A549 (cell line): ENCODE measurements at regions of chr14 and their contacts with region 1.

Region 1: GRCh38 chr14:68843471-68844209 is 50.8 kb upstream of the ZFP36L1 start:
- DNase-seq: peak; percentile 69 to 76
- ATAC-seq: peak; percentile 91 to 96
- H3K4me3 ChIP-seq: no peak overlapping the region; the same call in 2 of the 3 replicates
- H3K27ac ChIP-seq: peak overlapping the region; percentile 35 to 83
- H3K4me1 ChIP-seq: 0 out of 3 replicates have a peak, but pooled peaks cover 4% of the 10 kb centered on the region
- CTCF ChIP-seq: peak; percentile 96
- EP300 ChIP-seq: no peak
- POLR2A ChIP-seq: no peak
- RAD21 ChIP-seq: peak; percentile 83 to 87

Region 2: GRCh38 chr14:67883717-67884116 is 959.9 kb before region 1 on chr14:
- CTCF ChIA-PET with region 1: interaction called, 30 read pairs
- POLR2A ChIA-PET with region 1: no interaction called
- DNase-seq: peak; percentile 18
- ATAC-seq: no peak
- H3K4me3 ChIP-seq: no peak overlapping the region
- H3K27ac ChIP-seq: peak overlapping the region in 1 of 2 experiments; percentile 71; a peak in 2 of 6 replicates
- H3K4me1 ChIP-seq: peaks cover 12% of the 10 kb centered on the region; the same call in 1 of the 3 replicates
- CTCF ChIP-seq: peak; percentile 65
- EP300 ChIP-seq: no peak
- POLR2A ChIP-seq: no peak
- RAD21 ChIP-seq: peak; percentile 64 to 79

Region 3: DNA sequence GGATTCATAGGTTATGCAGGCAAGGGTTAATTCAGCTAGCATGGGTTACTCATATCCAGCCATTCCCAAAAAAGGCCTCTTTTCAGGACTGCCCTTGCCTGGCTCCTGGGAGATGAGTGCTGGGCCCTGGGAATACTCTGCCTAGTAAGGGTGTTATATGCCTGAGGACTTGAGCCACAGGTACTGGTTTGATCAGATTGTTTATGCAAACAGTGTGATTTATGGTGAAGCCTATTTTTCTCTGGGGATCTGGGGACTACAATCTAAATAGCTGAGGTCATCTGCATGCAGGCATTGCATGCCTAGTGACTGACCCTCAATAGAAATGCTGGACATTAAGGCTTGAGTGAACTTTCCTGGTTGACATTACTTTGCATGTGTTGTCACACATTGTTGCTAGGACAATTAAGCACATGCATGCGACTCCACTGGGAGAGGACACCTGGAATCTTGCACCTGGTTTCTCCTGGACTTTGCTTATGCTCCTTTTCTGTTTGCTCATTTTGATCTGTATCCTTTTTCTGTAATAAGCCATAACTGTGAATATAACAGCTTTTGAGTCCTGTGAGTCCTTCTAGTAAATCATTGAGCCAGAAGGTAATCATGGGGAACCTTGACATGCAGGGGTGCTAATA is 951.1 kb before region 1 on chr14:
- CTCF ChIA-PET with region 1: interaction called, 10 read pairs
- POLR2A ChIA-PET with region 1: no interaction called
- DNase-seq: no peak
- ATAC-seq: no peak
- H3K4me3 ChIP-seq: no peak overlapping the region
- H3K27ac ChIP-seq: no peak overlapping the region
- H3K4me1 ChIP-seq: peaks cover 1% of the 10 kb centered on the region; the same call in 1 of the 3 replicates
- CTCF ChIP-seq: no peak
- EP300 ChIP-seq: no peak
- POLR2A ChIP-seq: no peak
- RAD21 ChIP-seq: no peak

Region 4: DNA sequence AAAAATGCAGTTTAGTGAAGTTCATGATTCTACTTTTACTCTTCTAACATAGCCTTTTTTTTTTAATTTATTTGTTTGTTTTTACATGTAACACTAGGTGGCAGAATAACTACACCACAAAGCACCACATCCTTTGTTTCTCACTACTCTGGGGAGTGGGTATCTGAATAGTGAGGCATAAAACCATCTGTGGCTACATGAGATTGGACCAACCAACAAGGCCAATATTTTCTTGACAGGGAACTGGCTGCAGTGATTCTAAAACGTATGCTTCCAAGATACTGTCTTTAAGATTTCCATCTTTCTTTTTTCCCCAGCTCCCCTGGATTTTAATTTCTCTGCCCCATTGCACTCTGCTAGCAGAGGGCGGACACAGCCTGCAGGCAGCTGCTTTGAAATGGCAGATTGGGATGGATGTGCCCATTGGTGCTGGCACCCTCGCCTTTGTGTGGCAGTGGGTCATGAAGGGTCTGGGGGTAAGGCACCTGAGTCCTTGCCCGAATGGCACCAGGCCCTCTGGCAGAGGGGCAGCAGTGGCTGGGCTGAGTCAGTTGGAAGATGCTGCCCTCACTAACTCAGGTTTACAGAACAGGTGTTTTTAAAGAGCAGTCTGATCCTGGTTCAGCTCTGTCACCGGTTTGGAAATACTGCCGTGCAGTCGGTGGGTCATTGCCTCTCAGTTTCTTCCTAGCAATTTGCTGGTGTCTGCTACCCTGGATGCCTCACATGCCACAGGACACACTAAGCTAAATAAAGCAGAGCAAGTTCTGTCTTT is 595.0 kb before region 1 on chr14:
- CTCF ChIA-PET with region 1: interaction called, 18 read pairs
- POLR2A ChIA-PET with region 1: no interaction called
- DNase-seq: peak; percentile 61 to 86
- ATAC-seq: peak; percentile 81 to 84
- H3K4me3 ChIP-seq: no peak overlapping the region
- H3K27ac ChIP-seq: peak overlapping the region; percentile 95 to 97
- H3K4me1 ChIP-seq: peaks cover 76% of the 10 kb centered on the region
- CTCF ChIP-seq: peak; percentile 83
- EP300 ChIP-seq: no peak
- POLR2A ChIP-seq: no peak
- RAD21 ChIP-seq: peak; percentile 93 to 97

Region 5: GRCh38 chr14:68824517-68825347 is 18.9 kb before region 1 on chr14:
- CTCF ChIA-PET with region 1: interaction called, 32 read pairs
- POLR2A ChIA-PET with region 1: no interaction called
- DNase-seq: peak; percentile 80 to 90
- ATAC-seq: peak; percentile 94 to 99
- H3K4me3 ChIP-seq: no peak overlapping the region
- H3K27ac ChIP-seq: peak overlapping the region; percentile 60 to 72
- H3K4me1 ChIP-seq: no peaks in the 10 kb centered on the region
- CTCF ChIP-seq: peak; percentile 84
- EP300 ChIP-seq: no peak
- POLR2A ChIP-seq: no peak
- RAD21 ChIP-seq: peak; percentile 80 to 85

Region 6: DNA sequence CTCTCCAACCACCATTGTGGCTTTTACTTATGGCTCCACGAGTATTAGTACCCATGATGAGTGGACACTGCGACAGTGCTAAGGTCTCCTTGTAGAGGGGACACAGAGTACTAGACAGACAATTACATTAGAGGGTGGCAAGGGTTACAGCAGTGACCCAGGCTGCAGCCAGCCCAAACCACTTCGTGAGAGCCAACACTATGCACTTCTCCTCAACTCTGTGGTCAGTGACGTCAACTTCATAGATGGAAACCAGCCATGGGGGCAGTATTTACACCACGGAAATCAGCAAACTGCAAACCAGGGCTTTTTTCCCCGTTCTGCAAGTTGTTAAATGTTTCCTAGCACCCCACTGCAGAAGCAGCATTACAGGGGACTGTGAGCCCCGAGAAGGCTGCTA is 10.8 kb after region 1 on chr14:
- CTCF ChIA-PET with region 1: interaction called, 13 read pairs
- POLR2A ChIA-PET with region 1: no interaction called
- DNase-seq: no peak
- ATAC-seq: peak in 1 of 2 experiments; percentile 27; a peak in 2 of 6 replicates
- H3K4me3 ChIP-seq: no peak overlapping the region
- H3K27ac ChIP-seq: no peak overlapping the region
- H3K4me1 ChIP-seq: no peaks in the 10 kb centered on the region
- CTCF ChIP-seq: no peak
- EP300 ChIP-seq: no peak
- POLR2A ChIP-seq: no peak
- RAD21 ChIP-seq: no peak